Left lung (tissue), 14 donors: ENCODE measurements at regions of chr1 and their contacts with region 1.

Region 1: GRCh38 chr1:55277377-55278130 is 62.4 kb upstream of the USP24 start:
- DNase-seq: peak; percentile 57 to 85 (median 76)
- ATAC-seq: peak; percentile 97
- H3K4me3 ChIP-seq: no peak overlapping the region
- H3K27ac ChIP-seq: no peak overlapping the region
- H3K4me1 ChIP-seq: no peaks in the 10 kb centered on the region
- H3K27me3 ChIP-seq: no peaks in the 10 kb centered on the region
- CTCF ChIP-seq: peak; percentile 70 to 86

Region 2: GRCh38 chr1:55007625-55008024 is 269.9 kb before region 1 on chr1:
- intact Hi-C with region 1: no loop called
- DNase-seq: no peak
- ATAC-seq: no peak
- H3K4me3 ChIP-seq: no peak overlapping the region
- H3K27ac ChIP-seq: no peak overlapping the region
- H3K4me1 ChIP-seq: no peaks in the 10 kb centered on the region
- H3K27me3 ChIP-seq: no peaks in the 10 kb centered on the region
- CTCF ChIP-seq: no peak

Region 3: DNA sequence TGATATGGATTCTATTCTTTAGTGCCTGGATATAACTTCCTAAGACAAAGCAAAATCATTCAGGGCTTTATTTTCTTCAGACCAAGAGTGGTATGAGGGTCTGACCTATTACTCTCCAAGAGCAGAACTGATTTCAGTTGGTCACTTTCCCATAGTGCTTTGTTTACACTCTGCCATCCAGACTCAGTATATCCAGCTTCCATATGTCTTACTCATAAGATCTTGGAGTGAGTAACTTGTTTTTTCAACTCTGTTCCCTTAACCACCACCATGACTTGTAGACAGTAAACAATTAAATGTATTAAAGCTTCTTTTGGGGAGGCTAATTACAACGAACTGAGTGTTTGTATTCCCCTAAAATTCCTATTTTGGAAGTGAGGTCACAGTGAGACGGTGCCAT is 145.8 kb before region 1 on chr1:
- intact Hi-C with region 1: loop called in 1 of 2 experiments (anchors 10 kb)
- DNase-seq: no peak
- ATAC-seq: no peak
- H3K4me3 ChIP-seq: no peak overlapping the region
- H3K27ac ChIP-seq: no peak overlapping the region
- H3K4me1 ChIP-seq: peaks cover 0 to 18% of the 10 kb centered on the region in 2 donors
- H3K27me3 ChIP-seq: no peaks in the 10 kb centered on the region
- CTCF ChIP-seq: no peak

Region 4: DNA sequence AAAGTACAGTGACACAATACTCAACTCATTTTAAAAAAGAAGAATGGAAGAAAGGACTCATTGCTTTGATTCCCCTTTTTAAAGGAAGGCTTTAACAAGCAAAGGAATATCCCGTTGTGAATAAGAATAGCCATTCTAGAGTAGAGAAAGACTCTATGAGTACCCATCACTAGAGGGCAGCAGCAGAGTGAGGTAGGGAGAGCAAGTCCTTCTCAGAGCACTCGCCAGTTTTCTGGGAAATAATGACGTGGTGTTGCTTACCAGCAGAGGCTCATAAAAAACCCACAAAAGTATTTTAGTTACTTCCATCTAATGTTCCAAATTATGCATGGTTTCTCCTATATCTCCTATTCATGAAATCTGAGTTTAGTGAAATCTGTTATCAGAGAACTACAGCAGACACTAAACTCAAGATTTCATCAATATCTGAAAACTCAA is 137.0 kb before region 1 on chr1:
- intact Hi-C with region 1: loop called (anchors 5 to 10 kb)
- DNase-seq: peak in 3 of 4 donors; percentile 58 to 86 (median 71)
- ATAC-seq: peak; percentile 99
- H3K4me3 ChIP-seq: no peak overlapping the region
- H3K27ac ChIP-seq: peak overlapping the region; percentile 29 to 33
- H3K4me1 ChIP-seq: peaks cover 0 to 10% of the 10 kb centered on the region in 2 donors
- H3K27me3 ChIP-seq: no peaks in the 10 kb centered on the region
- CTCF ChIP-seq: peak; percentile 68

Region 5: GRCh38 chr1:55337801-55338447 is 60.4 kb after region 1 on chr1:
- intact Hi-C with region 1: no loop called
- DNase-seq: no peak
- ATAC-seq: peak; percentile 81
- H3K4me3 ChIP-seq: no peak overlapping the region
- H3K27ac ChIP-seq: no peak overlapping the region
- H3K4me1 ChIP-seq: no peaks in the 10 kb centered on the region
- H3K27me3 ChIP-seq: no peaks in the 10 kb centered on the region
- CTCF ChIP-seq: peak in 1 of 2 donors; percentile 40